Activated naive CD4-positive, alpha-beta T cell treated with anti-CD3 and anti-CD28 coated beads for 36 hours (primary cell): ENCODE measurements at regions of chr2 and their contacts with region 1.

Region 1: DNA sequence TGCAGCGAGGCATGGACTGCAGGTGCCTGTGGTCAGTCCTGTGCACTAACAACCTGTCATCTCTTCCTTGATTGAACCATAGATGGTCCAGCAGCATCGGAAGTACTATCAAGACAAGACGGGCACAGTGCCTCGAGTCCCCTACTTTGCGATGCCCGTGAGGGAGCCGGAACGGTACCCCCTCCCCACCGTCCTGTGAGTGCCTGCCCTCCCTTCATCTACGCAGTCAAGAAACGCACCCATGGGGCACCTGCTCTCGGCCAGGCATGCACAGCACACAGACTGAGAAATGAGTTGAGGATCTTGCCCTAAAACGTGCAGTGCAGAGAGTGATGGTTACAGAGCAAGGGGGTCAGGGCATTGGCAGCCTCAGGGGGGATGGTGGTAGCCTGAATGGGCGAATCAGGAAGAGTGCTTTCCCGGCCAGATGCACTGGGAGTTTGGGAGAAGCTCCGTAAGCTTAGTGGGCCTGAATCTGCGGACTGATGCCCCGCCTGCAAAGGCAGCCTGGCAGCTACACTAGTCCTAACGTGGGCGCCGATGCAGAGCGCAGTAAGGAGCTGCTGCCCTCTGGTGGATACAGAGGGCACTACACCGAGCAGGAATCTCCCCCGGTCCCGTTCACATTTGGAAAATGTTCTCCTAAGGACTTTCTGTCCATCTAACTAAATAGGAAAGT is 63.6 kb downstream of the CIB4 start:
- DNase-seq: peak; percentile 72
- H3K4me3 Mint-ChIP-seq: no peak overlapping the region
- H3K27ac Mint-ChIP-seq: no peak overlapping the region
- H3K4me1 Mint-ChIP-seq: no peaks in the 10 kb centered on the region
- H3K27me3 Mint-ChIP-seq: peaks cover 2% of the 10 kb centered on the region

Region 2: DNA sequence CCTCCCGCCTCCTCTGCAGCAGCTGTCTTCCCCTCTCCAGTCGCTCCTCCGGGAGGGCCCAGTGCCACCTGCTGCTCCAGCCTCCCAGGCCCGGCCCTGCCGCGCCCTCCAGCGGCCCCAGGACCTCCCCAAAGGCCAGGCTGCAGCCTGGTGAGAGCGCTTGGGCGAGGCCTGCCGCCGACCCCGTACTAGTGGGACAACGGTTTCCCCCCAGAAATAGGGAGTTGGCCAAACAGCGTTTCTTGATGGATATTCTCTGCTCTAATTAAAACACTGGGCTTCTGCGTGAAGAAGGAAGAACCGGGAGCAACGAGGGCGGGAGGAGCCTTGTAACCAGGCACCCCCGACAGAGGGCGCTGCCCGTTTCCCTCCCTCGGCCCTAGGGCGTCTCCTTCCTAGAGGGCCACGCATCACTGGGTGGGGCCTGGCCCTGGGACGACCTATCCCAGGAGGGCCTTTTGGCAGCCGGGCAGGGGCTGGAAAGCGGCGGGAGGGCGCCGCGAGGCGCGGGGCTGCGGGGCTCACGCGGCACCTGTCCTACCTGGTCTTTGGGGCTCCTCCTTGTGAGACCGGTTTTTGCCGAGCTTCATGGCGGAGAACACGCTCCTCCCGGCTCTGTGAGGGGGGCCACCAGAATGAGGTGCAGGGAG is 74.2 kb before region 1 on chr2:
- CTCF ChIA-PET with region 1: interaction called, 26 read pairs
- intact Hi-C with region 1: loop called (anchors 1 kb)
- DNase-seq: peak; percentile 92
- H3K4me3 Mint-ChIP-seq: peak overlapping the region; percentile 73
- H3K27ac Mint-ChIP-seq: no peak overlapping the region
- H3K4me1 Mint-ChIP-seq: peaks cover 6% of the 10 kb centered on the region
- H3K27me3 Mint-ChIP-seq: no peaks in the 10 kb centered on the region

Region 3: GRCh38 chr2:26521054-26521912 is 56.3 kb before region 1 on chr2:
- CTCF ChIA-PET with region 1: interaction called, 22 read pairs
- intact Hi-C with region 1: loop called (anchors 5 kb)
- DNase-seq: peak; percentile 12
- H3K4me3 Mint-ChIP-seq: no peak overlapping the region
- H3K27ac Mint-ChIP-seq: no peak overlapping the region
- H3K4me1 Mint-ChIP-seq: peaks cover 23% of the 10 kb centered on the region
- H3K27me3 Mint-ChIP-seq: no peaks in the 10 kb centered on the region

Region 4: DNA sequence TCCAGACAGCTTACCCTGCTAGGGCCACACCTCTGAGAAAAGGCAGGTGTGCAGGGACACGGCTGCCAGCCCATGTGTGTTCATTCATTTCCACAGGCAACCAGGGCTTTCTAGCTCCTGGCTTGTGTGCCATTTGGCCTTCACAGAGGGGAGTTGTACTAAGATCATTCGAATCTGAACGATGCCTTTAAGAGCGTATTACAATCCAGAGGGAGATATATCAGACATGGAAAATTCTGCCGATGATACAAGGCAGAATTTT is 35.4 kb before region 1 on chr2:
- CTCF ChIA-PET with region 1: interaction called, 12 read pairs
- intact Hi-C with region 1: no loop called
- DNase-seq: no peak
- H3K4me3 Mint-ChIP-seq: no peak overlapping the region
- H3K27ac Mint-ChIP-seq: no peak overlapping the region
- H3K4me1 Mint-ChIP-seq: no peaks in the 10 kb centered on the region
- H3K27me3 Mint-ChIP-seq: no peaks in the 10 kb centered on the region

Region 5: DNA sequence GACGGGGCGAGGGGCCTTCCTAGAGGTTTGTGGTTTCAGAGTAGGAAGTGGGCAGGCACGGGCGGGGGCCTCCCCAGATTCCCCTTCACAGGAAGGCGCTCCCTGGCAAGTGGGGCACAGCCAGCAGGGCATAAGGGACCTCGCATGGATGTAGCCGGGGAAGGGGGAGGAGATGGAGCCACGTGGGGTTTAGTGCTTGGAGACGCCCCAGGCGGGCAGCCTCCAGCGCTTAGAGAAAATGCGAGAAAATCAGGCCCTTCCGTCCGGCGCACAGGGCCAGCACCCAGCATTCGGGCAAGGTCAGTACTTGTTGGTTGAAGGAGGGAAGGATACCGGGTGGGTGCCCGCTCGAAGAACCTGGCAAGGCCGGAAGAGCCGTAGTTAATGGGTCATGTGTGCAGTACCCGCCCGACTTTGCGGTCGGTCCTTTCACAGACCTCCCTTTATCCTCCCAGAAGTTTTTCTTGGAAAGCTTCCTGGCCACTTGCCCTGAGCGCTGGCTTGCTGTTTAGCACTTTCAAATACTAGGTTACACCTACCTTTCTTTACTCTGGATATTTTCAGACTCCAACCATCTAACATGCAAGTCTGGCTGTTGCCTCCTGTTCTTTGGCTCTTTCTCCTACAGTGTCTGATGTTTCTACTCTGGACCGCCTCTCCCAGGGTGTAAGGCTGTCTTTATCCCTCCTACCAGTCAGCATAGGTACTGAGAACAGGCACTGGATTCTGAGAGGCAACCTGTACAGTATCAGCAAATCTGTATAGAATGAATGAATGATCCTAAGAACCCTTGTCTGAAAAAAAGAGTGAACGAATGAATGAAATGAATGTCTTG is 14.5 kb before region 1 on chr2:
- CTCF ChIA-PET with region 1: interaction called, 15 read pairs
- intact Hi-C with region 1: no loop called
- DNase-seq: no peak
- H3K4me3 Mint-ChIP-seq: no peak overlapping the region
- H3K27ac Mint-ChIP-seq: no peak overlapping the region
- H3K4me1 Mint-ChIP-seq: peaks cover 9% of the 10 kb centered on the region
- H3K27me3 Mint-ChIP-seq: peaks cover 47% of the 10 kb centered on the region

Region 6: DNA sequence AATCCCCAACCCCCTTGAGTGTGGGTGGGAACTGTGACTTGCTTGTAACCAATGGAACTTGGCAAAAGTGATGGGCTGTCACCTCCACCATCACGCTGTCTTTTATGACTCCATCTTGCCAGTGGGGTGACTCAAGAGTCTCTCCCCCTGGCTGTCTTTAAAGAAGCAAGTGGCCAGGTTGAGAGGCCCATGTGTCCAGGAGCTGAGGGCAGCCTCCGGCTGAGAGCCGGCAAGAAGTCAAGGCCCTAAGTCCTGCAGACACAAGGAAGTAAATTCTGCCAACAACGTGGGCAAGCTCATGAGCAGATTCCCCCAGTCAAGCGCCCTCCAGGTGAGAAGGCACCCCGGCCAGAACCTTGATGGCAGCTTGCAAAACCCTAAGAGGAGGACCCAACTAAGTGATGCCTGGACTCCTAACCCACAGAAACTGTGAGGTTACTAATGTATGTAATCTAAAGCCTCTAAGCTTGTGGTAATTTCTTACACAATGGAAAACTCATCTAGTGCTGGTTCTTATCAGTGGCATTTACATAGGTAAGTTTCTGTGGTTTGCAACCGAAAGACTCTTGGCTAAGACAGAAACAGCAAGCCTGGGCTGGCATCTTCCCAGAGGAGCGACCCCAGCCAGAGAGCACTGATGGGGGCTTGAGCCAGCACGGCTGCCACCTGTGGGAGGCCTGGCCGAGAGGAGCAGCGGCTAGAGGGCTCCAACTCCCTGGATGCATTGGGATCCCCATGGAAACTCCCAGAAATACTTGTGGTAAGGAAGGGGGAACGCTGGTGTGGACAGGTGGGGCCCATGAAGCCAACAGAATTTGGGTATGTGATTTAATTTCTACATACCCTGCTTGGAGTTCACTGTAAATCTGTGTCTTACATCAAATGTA is 14.3 kb after region 1 on chr2:
- CTCF ChIA-PET with region 1: interaction called, 22 read pairs
- intact Hi-C with region 1: no loop called
- DNase-seq: no peak
- H3K4me3 Mint-ChIP-seq: no peak overlapping the region
- H3K27ac Mint-ChIP-seq: no peak overlapping the region
- H3K4me1 Mint-ChIP-seq: peaks cover 3% of the 10 kb centered on the region
- H3K27me3 Mint-ChIP-seq: peaks cover 17% of the 10 kb centered on the region

Region 7: GRCh38 chr2:26605195-26605998 is 27.8 kb after region 1 on chr2:
- CTCF ChIA-PET with region 1: interaction called, 12 read pairs
- intact Hi-C with region 1: no loop called
- DNase-seq: peak; percentile 52
- H3K4me3 Mint-ChIP-seq: no peak overlapping the region
- H3K27ac Mint-ChIP-seq: no peak overlapping the region
- H3K4me1 Mint-ChIP-seq: peaks cover 18% of the 10 kb centered on the region
- H3K27me3 Mint-ChIP-seq: peaks cover 21% of the 10 kb centered on the region